Activated CD8-positive, alpha-beta memory T cell treated with anti-CD3 and anti-CD28 coated beads, Interleukin-2, amount 10 ng/mL, durations not matched to agents 7 days and 5 days (primary cell): ENCODE measurements at regions of chr6 and their contacts with region 1.

Region 1: DNA sequence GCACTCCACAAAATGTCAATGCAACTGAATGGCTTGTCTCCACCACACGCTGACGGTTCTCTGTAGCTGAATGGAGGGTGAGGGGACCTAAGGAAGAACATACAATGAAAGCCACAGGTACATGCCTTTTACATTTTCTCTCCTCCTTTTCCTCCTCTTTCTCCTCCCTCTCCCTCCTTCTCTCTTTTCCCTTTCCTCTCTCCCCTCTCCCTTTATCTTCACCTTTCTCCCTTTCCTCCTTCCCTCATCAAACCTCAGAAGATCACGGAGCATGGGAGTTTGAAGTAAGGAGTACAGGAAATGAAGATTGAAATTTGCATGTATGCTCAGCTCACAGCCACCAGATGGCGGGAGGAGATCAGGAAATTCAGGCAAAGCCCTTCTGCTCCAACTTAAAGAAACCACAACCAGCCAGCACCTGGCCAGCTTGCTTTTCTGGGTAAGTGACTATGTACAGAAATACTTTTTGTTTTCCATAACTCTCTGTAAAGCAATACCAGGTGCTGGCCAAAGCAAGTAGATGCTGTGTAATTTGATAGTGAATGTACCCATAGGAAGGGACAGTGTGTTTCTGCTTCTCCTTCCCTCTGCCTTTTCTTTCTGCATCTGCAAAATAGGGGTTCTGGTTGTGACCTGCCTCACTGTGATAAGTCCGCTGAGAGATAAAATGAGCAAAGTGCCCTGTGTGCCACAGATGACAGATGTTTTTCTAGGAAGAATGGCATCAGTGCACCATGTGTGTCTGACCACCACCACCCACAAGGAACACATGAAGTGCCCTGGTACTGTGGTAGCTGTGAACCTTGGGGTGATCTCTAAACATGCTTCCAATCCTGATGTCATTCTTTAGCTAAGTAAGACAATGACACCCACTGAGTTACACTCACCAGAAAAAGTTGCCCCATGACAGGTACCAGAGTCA is 18.6 kb upstream of the FOXO3 start:
- DNase-seq: peak; percentile 82
- ATAC-seq: peak; percentile 84
- H3K4me3 Mint-ChIP-seq: peak overlapping the region; percentile 35
- H3K27ac Mint-ChIP-seq: peak overlapping the region; percentile 51
- H3K4me1 Mint-ChIP-seq: peaks cover 16% of the 10 kb centered on the region
- H3K27me3 Mint-ChIP-seq: peaks cover 19% of the 10 kb centered on the region

Region 2: GRCh38 chr6:108492131-108492766 is 49.9 kb before region 1 on chr6:
- CTCF ChIA-PET with region 1: no interaction called
- DNase-seq: no peak
- ATAC-seq: no peak
- H3K4me3 Mint-ChIP-seq: no peak overlapping the region
- H3K27ac Mint-ChIP-seq: no peak overlapping the region
- H3K4me1 Mint-ChIP-seq: no peaks in the 10 kb centered on the region
- H3K27me3 Mint-ChIP-seq: peaks cover 4% of the 10 kb centered on the region

Region 3: GRCh38 chr6:108555399-108556052 is 13.4 kb after region 1 on chr6:
- CTCF ChIA-PET with region 1: interaction called, 17 read pairs
- DNase-seq: no peak
- ATAC-seq: no peak
- H3K4me3 Mint-ChIP-seq: no peak overlapping the region
- H3K27ac Mint-ChIP-seq: no peak overlapping the region
- H3K4me1 Mint-ChIP-seq: peaks cover 12% of the 10 kb centered on the region
- H3K27me3 Mint-ChIP-seq: peaks cover 22% of the 10 kb centered on the region

Region 4: GRCh38 chr6:108592371-108593337 is 50.6 kb after region 1 on chr6:
- CTCF ChIA-PET with region 1: no interaction called
- DNase-seq: peak; percentile 86
- ATAC-seq: peak; percentile 90
- H3K4me3 Mint-ChIP-seq: no peak overlapping the region
- H3K27ac Mint-ChIP-seq: peak overlapping the region; percentile 68
- H3K4me1 Mint-ChIP-seq: peaks cover 67% of the 10 kb centered on the region
- H3K27me3 Mint-ChIP-seq: no peaks in the 10 kb centered on the region

Region 5: DNA sequence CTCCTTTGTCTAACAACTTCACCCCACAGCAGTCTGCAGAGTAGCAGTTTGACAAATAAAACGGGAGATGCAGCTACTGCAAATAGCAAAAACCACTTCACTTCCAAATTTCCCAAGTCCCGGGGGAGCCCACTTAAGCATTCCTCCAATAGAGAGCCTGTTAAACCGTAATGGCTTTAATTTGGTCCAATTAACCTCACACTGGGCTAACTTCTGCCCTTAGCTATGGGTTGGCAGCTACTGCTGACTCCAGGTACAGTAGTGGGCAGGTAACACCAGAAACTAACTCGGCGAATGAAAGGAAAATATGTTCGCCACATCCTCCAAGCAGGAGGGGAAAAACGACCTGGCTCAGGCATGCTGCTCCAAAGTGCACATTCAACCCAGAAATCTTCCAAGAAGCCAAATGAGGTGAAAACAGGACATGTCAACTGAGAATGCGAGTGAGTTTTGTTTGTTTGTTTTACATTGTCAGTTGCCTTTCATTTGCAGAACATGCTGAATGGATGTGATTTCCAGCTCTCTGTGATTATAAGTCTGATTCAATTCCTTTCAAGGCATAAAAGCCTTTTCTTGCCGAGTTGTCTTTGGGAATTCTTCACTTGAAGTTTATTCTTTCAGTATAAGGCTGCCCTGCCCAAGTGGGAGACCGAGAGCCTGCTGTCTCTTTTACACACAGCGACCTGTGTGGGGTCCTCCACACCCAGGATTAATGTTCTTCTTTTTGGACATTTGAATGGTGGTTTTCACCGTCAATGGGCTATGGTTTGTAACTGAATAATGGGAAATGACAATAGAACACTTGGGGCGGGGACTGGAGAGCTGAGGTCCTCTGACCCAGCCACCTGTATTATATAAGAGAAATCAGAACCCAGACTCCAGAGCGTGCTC is 188.8 kb after region 1 on chr6:
- CTCF ChIA-PET with region 1: no interaction called
- DNase-seq: no peak
- ATAC-seq: no peak
- H3K4me3 Mint-ChIP-seq: no peak overlapping the region
- H3K27ac Mint-ChIP-seq: no peak overlapping the region
- H3K4me1 Mint-ChIP-seq: no peaks in the 10 kb centered on the region
- H3K27me3 Mint-ChIP-seq: peaks cover 2% of the 10 kb centered on the region

Region 6: DNA sequence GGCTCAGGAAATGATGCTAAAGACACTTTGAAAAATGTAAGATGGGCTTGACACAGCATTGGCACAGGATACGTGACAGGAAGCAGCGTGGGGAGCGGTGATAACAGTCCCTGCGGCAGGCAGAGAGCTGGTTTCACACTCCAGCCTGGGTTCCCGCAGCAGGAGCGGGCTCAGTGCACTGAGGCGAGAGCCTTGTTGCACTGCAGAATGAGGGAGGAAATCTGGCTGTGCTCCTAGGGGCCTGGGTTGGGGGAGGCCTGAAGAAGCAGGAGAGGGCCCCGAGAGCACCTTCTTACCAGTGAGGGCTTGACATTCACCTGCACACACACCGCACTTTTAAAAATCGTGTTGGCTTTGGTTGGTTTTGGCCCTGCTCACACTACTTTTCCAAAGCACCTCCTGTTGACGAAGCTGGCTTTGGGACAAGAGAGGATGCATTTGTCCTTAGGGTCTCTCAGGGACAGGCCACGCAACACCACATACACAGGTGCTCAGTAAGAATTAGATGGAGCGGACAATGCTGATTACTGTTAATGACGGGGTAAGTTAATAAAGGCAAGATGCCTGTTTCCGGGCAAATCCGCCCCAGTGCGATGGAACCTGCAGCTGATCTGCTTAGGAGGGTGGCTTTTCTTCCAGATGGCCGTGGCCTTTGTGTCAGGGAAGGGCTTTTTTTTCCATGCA is 256.7 kb after region 1 on chr6:
- CTCF ChIA-PET with region 1: interaction called, 11 read pairs
- DNase-seq: peak; percentile 88
- ATAC-seq: peak; percentile 98
- H3K4me3 Mint-ChIP-seq: peak overlapping the region; percentile 29
- H3K27ac Mint-ChIP-seq: peak overlapping the region; percentile 90
- H3K4me1 Mint-ChIP-seq: peaks cover 45% of the 10 kb centered on the region
- H3K27me3 Mint-ChIP-seq: no peaks in the 10 kb centered on the region

Region 7: DNA sequence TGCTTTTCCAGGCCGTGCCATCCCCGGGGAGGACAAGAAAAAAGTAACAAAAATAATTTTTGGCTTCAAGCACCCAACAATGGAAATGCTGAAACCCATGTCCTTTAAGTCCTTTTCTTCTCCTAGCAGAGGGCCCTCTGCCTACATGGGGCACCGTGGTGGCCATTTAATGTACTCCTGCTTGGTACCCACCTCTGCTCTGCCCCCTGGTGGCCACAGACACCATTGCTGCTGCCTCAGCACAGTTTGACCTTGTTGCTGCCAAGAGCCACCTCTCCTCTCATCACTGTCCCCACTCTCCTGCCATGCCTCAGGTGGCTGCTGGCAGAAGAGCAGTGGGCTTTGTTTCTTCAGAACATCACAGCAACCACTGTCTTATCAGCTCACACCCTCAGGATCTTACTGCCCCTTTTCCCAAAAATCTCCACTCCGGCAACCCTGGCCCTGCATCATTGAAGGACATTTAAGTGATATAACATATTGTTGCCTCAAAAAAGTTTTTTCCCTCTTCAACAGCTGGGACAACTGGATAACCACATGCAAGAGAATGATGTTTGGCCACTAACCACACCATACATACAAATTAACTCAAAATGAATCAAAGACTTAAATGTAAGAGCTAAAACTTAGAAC is 293.2 kb after region 1 on chr6:
- CTCF ChIA-PET with region 1: interaction called, 24 read pairs
- DNase-seq: peak; percentile 92
- ATAC-seq: peak; percentile 93
- H3K4me3 Mint-ChIP-seq: no peak overlapping the region
- H3K27ac Mint-ChIP-seq: peak overlapping the region; percentile 48
- H3K4me1 Mint-ChIP-seq: peaks cover 50% of the 10 kb centered on the region
- H3K27me3 Mint-ChIP-seq: no peaks in the 10 kb centered on the region

Region 8: DNA sequence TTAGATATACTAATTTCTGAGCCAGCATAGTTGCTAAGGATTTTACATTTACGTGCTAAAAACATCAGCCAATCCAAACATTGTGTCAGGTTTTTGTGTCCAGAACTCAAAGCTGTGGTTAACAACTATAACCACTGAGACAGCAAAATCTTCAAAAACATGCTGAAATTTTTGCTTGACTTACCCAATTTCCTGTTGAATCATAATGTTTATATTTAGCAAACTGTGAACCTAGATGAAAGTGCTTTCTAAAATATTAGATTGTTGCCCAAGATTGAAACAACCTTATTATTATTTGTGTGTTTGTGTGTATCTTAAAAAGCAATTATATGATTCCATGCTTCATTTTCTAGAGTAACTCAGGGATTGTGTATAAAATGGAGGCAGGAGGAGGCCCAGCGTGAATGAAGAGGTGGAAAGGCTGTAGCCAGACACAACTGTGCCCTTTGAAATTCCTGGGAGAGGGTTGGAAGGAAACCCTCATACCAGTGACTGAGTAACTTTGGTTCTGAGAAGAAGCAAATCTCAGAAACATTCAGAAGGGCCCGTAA is 354.1 kb after region 1 on chr6:
- CTCF ChIA-PET with region 1: interaction called, 27 read pairs
- DNase-seq: no peak
- ATAC-seq: peak; percentile 71
- H3K4me3 Mint-ChIP-seq: peak overlapping the region; percentile 37
- H3K27ac Mint-ChIP-seq: peak overlapping the region; percentile 95
- H3K4me1 Mint-ChIP-seq: peaks cover 52% of the 10 kb centered on the region
- H3K27me3 Mint-ChIP-seq: peaks cover 5% of the 10 kb centered on the region

Region 9: GRCh38 chr6:109073344-109074132 is 531.4 kb after region 1 on chr6:
- CTCF ChIA-PET with region 1: interaction called, 115 read pairs
- DNase-seq: peak; percentile 63
- ATAC-seq: peak; percentile 69
- H3K4me3 Mint-ChIP-seq: no peak overlapping the region
- H3K27ac Mint-ChIP-seq: no peak overlapping the region
- H3K4me1 Mint-ChIP-seq: peaks cover 32% of the 10 kb centered on the region
- H3K27me3 Mint-ChIP-seq: no peaks in the 10 kb centered on the region

Region 10: DNA sequence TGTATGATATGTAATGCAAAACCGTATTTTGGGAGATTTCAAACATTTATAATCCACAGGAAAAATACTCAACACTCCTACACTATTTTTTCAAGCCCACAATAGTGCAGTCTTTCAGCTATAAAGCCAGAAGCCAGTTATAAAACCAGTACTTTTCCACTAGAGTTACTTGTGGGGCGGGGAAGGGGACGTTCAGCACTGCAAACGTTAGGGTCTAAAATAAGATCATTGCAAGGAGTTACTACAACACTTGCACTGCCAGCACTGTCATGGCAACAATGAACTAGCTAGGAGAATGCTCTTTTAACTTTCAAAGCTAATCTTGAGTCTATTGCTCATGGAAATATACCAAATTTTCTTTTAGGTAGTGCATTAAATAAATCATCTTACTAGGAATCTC is 537.9 kb after region 1 on chr6:
- CTCF ChIA-PET with region 1: interaction called, 115 read pairs
- DNase-seq: no peak
- ATAC-seq: no peak
- H3K4me3 Mint-ChIP-seq: no peak overlapping the region
- H3K27ac Mint-ChIP-seq: no peak overlapping the region
- H3K4me1 Mint-ChIP-seq: peaks cover 6% of the 10 kb centered on the region
- H3K27me3 Mint-ChIP-seq: no peaks in the 10 kb centered on the region